ENCODE measurements at regions of chr22 and their contacts with region 1.

Region 1: GRCh38 chr22:27804470-27805297 is 3.1 kb upstream of the MN1 start:
- DNase-seq: peak; percentile 14
- H3K4me3 Mint-ChIP-seq: peak overlapping the region; percentile 53
- H3K27ac Mint-ChIP-seq: no peak overlapping the region
- H3K4me1 Mint-ChIP-seq: peaks cover 13% of the 10 kb centered on the region
- H3K27me3 Mint-ChIP-seq: peaks cover 38% of the 10 kb centered on the region

Region 2: GRCh38 chr22:26679003-26679629 is 1125.6 kb before region 1 on chr22:
- intact Hi-C with region 1: loop called (anchors 2 kb)
- DNase-seq: peak; percentile 62
- H3K4me3 Mint-ChIP-seq: no peak overlapping the region
- H3K27ac Mint-ChIP-seq: peak overlapping the region; percentile 62
- H3K4me1 Mint-ChIP-seq: peaks cover 35% of the 10 kb centered on the region
- H3K27me3 Mint-ChIP-seq: no peaks in the 10 kb centered on the region

Region 3: DNA sequence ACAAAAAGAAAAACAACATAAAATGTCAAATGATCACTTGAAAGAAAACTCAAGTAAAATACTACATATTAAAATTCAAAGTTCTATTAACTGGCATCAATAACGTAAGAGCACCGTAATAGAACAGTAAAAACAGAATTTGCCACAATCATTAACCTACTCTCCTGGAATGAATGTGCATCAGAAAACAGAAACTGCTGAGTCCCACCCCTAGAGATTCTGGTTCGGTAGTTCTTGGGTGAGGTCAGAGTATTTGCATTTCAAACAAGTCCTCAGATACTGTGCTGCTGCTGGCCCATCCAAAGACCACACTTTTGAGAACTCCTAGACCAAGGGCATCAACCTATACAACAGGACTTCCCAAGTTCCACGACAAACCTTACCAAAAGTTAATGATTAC is 90.9 kb after region 1 on chr22:
- intact Hi-C with region 1: no loop called
- DNase-seq: no peak
- H3K4me3 Mint-ChIP-seq: no peak overlapping the region
- H3K27ac Mint-ChIP-seq: no peak overlapping the region
- H3K4me1 Mint-ChIP-seq: peaks cover 28% of the 10 kb centered on the region
- H3K27me3 Mint-ChIP-seq: no peaks in the 10 kb centered on the region